Activated CD8-positive, alpha-beta memory T cell treated with anti-CD3 and anti-CD28 coated beads, Interleukin-2, amount 10 ng/mL, durations not matched to agents 7 days and 5 days (primary cell): ENCODE measurements at regions of chr2 and their contacts with region 1.

Region 1: GRCh38 chr2:157327621-157328500 is 2.2 kb upstream of the ERMN start:
- DNase-seq: peak; percentile 91
- ATAC-seq: peak; percentile 98
- H3K4me3 Mint-ChIP-seq: peak overlapping the region; percentile 24
- H3K27ac Mint-ChIP-seq: peak overlapping the region; percentile 53
- H3K4me1 Mint-ChIP-seq: peaks cover 39% of the 10 kb centered on the region
- H3K27me3 Mint-ChIP-seq: no peaks in the 10 kb centered on the region

Region 2: DNA sequence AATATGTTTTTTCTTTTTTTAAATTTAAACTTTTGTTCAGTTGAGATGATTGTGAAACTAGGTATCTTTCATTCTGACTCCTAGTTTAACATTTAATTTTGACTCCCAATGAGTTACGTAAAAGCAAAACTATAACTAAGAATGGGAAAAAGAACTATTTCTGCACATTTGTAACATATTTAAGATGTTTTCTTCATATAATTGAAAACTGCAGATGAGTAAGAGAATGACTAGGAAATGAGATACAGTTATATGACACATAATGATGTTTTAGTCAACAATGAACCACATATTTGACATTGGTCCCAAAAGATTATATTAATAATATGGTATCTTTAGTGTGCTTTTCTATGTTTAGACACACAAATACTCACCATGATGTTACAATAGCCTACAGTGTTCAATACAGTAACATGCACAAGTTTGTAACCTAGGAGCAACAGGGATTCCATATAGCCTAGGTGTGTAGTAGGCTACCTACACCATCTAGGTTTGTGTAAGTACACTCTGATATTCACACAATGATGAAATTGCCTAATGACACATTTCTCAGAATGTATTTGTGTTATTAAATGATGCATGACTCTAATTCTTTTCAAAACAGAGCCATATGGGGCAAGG is 14.9 kb before region 1 on chr2:
- CTCF ChIA-PET with region 1: interaction called, 96 read pairs
- DNase-seq: no peak
- ATAC-seq: no peak
- H3K4me3 Mint-ChIP-seq: no peak overlapping the region
- H3K27ac Mint-ChIP-seq: no peak overlapping the region
- H3K4me1 Mint-ChIP-seq: peaks cover 17% of the 10 kb centered on the region
- H3K27me3 Mint-ChIP-seq: peaks cover 3% of the 10 kb centered on the region

Region 3: DNA sequence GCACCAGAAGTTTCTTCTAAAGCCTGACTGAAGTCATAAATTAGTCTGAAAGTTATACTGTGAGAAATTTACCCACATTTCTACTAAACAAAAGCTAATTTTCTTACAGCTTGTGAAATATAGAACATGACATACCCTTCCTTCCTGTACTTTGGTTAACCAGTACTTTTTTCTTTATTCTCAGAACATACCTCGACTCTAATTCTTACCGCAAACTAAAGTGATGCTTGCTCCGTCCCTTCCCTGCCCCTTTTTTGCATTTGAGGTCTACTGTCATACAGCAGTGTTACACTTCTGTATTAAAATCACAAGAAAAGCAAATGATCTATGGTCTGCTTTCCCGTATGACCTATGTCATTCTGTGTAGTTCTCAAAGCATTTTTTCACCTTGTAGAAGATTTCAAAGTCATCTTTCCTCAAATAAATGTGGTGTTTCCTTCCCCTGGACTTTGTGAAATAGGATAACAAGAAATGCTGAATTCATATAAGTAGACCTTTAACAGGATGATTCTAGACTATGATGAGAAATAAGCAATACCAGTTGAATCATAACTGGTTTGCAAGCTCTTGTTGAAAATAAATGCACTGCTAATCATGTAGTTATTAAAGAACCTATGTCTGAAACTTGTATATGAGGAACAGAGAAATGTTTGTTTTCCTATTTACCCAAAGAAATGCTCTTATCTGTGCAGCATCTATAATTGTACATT is 85.6 kb after region 1 on chr2:
- CTCF ChIA-PET with region 1: interaction called, 25 read pairs
- DNase-seq: peak; percentile 79
- ATAC-seq: peak; percentile 76
- H3K4me3 Mint-ChIP-seq: peak overlapping the region; percentile 49
- H3K27ac Mint-ChIP-seq: peak overlapping the region; percentile 87
- H3K4me1 Mint-ChIP-seq: peaks cover 76% of the 10 kb centered on the region
- H3K27me3 Mint-ChIP-seq: no peaks in the 10 kb centered on the region

Region 4: GRCh38 chr2:157433394-157433793 is 105.5 kb after region 1 on chr2:
- CTCF ChIA-PET with region 1: interaction called, 25 read pairs
- DNase-seq: no peak
- ATAC-seq: peak; percentile 10
- H3K4me3 Mint-ChIP-seq: peak overlapping the region; percentile 100
- H3K27ac Mint-ChIP-seq: peak overlapping the region; percentile 84
- H3K4me1 Mint-ChIP-seq: peaks cover 83% of the 10 kb centered on the region
- H3K27me3 Mint-ChIP-seq: no peaks in the 10 kb centered on the region

Region 5: DNA sequence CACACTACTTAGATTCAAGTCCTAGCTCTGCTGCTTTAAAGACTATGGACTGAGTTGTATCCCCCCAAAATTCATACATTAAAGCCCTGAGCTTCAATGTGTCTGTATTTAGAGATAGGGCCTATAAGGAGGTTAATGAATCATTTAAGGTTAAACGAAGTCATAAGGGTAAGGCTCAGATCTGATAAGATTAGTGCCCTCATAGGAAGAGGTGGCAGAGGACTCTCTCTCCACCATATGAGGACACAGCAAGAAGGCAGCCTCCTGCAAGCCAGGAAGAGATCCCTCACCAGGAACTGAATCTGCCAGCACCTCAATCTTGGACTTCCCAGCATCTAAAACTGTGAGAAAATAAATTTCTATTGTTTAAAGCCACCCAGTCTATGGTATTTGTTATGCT is 119.2 kb after region 1 on chr2:
- CTCF ChIA-PET with region 1: interaction called, 10 read pairs
- DNase-seq: no peak
- ATAC-seq: peak; percentile 51
- H3K4me3 Mint-ChIP-seq: peak overlapping the region; percentile 73
- H3K27ac Mint-ChIP-seq: peak overlapping the region; percentile 87
- H3K4me1 Mint-ChIP-seq: peaks cover 57% of the 10 kb centered on the region
- H3K27me3 Mint-ChIP-seq: no peaks in the 10 kb centered on the region

Region 6: GRCh38 chr2:157628477-157629415 is 300.9 kb after region 1 on chr2 and contains the start of gene ACVR1C:
- CTCF ChIA-PET with region 1: interaction called, 11 read pairs
- DNase-seq: peak; percentile 81
- ATAC-seq: peak; percentile 90
- H3K4me3 Mint-ChIP-seq: peak within 1 kb of the TSS; percentile 79
- H3K27ac Mint-ChIP-seq: peak within 1 kb of the TSS; percentile 73
- H3K4me1 Mint-ChIP-seq: peaks cover 32% of the 10 kb centered on the region
- H3K27me3 Mint-ChIP-seq: peaks cover 19% of the 10 kb centered on the region
- total RNA-seq, gene ACVR1C: 1.2 to 2.4 TPM